ENCODE measurements at regions of chr7 and their contacts with region 1.

Region 1: GRCh38 chr7:98922393-98923187 is 44.3 kb downstream of the TRRAP start:
- DNase-seq: no peak
- ATAC-seq: peak; percentile 47 to 67 (median 59)
- H3K4me3 ChIP-seq: no peak overlapping the region
- H3K27ac ChIP-seq: no peak overlapping the region
- H3K4me1 ChIP-seq: peaks cover 0 to 9% (median 0%) of the 10 kb centered on the region in 12 donors
- H3K27me3 ChIP-seq: no peaks in the 10 kb centered on the region
- CTCF ChIP-seq: peak in 5 of 12 donors; percentile 17 to 34 (median 24)
- POLR2A ChIP-seq: no peak

Region 2: DNA sequence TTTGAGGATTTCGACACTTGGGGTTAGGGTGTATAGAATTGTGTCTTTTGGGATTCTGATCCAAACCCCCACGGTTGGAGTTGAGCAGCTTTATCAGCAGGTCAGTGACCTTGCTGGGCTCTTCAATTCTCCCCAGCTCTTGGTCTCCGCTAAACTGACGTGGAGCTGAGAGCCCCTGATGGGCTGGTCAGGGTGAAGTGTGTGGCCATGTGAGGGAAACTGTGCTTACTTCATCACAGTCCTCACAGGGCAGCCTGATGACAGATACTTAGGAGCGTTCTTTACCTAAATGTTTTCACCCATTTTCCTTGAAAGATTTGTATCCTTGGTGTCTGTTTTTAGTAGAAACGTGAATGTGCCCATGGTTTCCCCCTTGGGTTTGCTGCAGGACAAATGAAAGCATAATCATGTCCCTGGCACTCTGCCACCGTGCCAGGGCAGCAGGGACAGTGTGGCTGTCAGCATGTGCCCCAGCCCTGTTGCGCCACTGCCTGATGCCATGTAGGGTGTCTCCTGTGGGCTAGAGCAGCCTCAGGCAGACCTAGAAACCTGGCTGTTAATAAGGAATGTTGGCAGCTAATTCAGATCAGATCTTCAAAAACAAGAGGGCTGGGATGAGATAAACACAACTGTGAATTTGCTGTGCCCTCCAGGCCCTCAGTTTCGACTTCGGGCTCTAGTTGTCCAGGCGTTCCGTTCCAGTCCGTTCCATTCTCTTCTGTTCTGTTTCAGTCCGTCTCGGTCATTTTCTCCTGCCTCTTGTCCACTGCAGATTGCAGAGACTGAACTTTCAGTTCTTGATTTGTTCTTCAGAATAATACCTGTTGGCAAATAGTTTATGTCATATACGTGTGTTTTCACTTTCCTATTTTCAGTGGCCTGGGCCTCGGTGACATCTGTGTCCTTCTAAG is 52.6 kb after region 1 on chr7:
- intact Hi-C with region 1: loop called in 1 of 10 experiments (anchors 10 kb)
- DNase-seq: peak; percentile 60 to 85 (median 78)
- ATAC-seq: peak; percentile 93 to 96 (median 96)
- H3K4me3 ChIP-seq: no peak overlapping the region
- H3K27ac ChIP-seq: peak overlapping the region in 10 of 12 donors; percentile 23 to 81 (median 64)
- H3K4me1 ChIP-seq: peaks cover 0 to 12% (median 0%) of the 10 kb centered on the region in 12 donors
- H3K27me3 ChIP-seq: no peaks in the 10 kb centered on the region
- CTCF ChIP-seq: no peak
- POLR2A ChIP-seq: no peak

Region 3: GRCh38 chr7:98993024-98993897 is 70.7 kb after region 1 on chr7:
- intact Hi-C with region 1: no loop called
- DNase-seq: peak in 1 of 5 donors; percentile 10
- ATAC-seq: no peak
- H3K4me3 ChIP-seq: no peak overlapping the region
- H3K27ac ChIP-seq: no peak overlapping the region
- H3K4me1 ChIP-seq: no peaks in the 10 kb centered on the region
- H3K27me3 ChIP-seq: no peaks in the 10 kb centered on the region
- CTCF ChIP-seq: no peak
- POLR2A ChIP-seq: no peak

Region 4: DNA sequence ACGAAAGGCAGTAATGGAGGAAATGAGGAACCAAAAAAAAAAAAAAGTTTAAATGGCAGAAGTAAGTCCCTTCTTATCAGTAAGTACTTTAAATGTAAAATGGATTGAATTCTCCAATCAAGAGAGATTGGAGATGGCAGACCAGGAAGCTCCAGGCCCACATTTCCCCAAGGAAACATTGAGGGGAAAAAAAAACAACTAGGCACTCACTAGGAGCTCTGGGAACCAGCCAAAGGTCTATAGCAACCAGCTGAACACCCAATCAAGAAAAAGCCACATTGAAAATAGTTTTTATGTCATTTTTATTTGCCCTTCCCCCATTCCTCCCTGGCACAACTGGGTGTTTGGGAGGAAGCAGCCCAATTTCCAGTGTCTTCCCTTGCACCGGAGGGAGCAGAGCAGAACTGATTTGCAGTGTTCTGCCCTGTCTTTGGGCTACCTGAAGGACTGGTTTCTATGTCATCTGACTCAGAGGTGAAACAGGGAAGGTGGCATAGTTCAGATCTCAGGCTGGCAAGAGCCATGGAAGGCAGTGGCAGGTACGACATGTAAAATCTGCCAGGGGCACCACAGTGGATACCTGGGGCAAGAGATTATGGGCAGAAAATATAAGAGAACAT is 99.5 kb after region 1 on chr7:
- intact Hi-C with region 1: no loop called
- DNase-seq: no peak
- ATAC-seq: no peak
- H3K4me3 ChIP-seq: no peak overlapping the region
- H3K27ac ChIP-seq: peak overlapping the region in 2 of 12 donors; percentile 11 to 15
- H3K4me1 ChIP-seq: peaks cover 0 to 20% (median 6%) of the 10 kb centered on the region in 12 donors
- H3K27me3 ChIP-seq: no peaks in the 10 kb centered on the region
- CTCF ChIP-seq: no peak
- POLR2A ChIP-seq: no peak